Naive thymus-derived CD8-positive, alpha-beta T cell (primary cell): ENCODE measurements at regions of chr3 and their contacts with region 1.

Region 1: DNA sequence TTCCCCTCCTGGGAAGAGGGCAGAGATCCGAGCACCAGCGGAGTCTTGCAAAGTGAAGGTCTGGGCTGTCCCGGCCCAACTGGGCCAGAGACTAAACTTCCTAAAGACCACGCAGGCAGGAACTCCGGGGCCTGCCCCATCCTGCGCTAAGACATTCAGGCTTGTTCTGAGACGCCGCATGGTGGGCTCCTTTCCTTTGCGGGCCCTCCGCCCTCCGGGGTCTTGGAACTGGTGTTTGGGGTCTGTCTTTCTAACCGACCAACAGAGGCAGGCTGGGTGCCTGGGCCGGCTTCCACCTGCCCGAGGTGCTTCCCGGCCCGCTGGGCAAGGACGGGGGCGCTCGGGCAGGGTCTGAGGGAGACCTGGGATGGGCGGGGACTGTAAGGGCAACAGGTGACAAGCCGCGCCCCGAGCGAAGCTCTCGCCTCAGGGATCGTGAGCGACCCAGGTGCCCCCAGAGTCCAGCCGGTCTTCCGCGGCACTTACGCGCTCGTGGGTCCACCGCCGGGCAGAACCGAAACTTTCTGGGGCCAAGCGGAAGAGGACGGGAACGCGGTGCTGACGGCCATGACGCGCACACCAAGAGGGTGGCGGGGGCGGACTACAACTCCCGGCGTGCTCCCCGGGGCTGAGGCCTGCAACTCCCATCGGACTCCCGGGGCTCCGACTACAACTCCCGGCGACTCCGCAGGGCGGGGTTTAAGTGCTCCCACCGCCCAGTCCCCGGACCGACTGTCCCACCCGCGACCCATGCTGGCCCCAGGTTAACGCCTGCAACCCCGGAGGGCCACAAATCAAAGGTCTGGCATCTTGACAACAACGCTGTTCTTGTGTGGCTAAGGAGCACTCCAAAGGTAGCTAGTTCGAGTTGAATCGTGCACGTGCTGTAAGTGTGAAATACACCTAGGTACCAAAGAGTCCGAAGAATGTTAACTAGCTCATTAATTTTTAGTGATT is at the start of gene FYCO1:
- DNase-seq: peak; percentile 74 to 91 (median 83)
- ATAC-seq: peak; percentile 93 to 96
- H3K4me3 Mint-ChIP-seq: peak within 1 kb of the TSS; percentile 83 to 91 (median 88)
- H3K27ac Mint-ChIP-seq: peak within 1 kb of the TSS; percentile 73 to 95 (median 90)
- H3K4me1 Mint-ChIP-seq: peaks cover 16 to 46% (median 42%) of the 10 kb centered on the region in 4 donors
- H3K27me3 Mint-ChIP-seq: peaks cover 0 to 7% (median 0%) of the 10 kb centered on the region in 5 donors
- polyA plus RNA-seq, gene FYCO1: 1.7 to 6.0 (median 2.6) TPM

Region 2: GRCh38 chr3:45950686-45951600 is 44.6 kb before region 1 on chr3:
- POLR2A ChIA-PET with region 1: interaction called, 12 read pairs
- DNase-seq: peak in 6 of 10 donors; percentile 42 to 79 (median 60)
- ATAC-seq: peak; percentile 89 to 96
- H3K4me3 Mint-ChIP-seq: peak overlapping the region in 8 of 10 donors; percentile 29 to 74 (median 58)
- H3K27ac Mint-ChIP-seq: peak overlapping the region; percentile 70 to 93 (median 88)
- H3K4me1 Mint-ChIP-seq: peaks cover 24 to 61% (median 50%) of the 10 kb centered on the region in 4 donors
- H3K27me3 Mint-ChIP-seq: no peaks in the 10 kb centered on the region

Region 3: DNA sequence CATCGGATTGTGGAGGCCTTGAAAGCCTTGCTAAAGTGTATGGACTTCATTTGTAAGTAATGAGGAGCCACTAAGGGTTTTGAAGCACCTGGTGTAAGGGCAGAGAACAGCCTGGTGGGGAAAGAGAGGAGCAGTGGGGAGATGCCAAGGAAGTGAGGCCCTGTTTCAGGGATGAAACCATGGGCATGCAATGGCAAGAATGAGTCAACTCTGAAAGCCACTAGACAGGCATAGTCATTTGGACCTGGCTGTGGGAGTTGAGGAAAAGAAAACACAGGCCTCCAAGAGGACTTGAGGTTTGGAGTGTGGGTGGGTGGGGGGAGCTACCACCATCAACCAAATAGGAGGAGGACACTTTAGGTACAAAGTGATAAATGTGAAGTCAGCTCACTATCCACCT is 24.2 kb after region 1 on chr3:
- POLR2A ChIA-PET with region 1: no interaction called
- DNase-seq: no peak
- ATAC-seq: no peak
- H3K4me3 Mint-ChIP-seq: no peak overlapping the region
- H3K27ac Mint-ChIP-seq: no peak overlapping the region
- H3K4me1 Mint-ChIP-seq: peaks cover 7 to 18% (median 12%) of the 10 kb centered on the region in 4 donors
- H3K27me3 Mint-ChIP-seq: peaks cover 0 to 7% (median 1%) of the 10 kb centered on the region in 5 donors